ENCODE measurements at regions of chr3 and their contacts with region 1.

Region 1: DNA sequence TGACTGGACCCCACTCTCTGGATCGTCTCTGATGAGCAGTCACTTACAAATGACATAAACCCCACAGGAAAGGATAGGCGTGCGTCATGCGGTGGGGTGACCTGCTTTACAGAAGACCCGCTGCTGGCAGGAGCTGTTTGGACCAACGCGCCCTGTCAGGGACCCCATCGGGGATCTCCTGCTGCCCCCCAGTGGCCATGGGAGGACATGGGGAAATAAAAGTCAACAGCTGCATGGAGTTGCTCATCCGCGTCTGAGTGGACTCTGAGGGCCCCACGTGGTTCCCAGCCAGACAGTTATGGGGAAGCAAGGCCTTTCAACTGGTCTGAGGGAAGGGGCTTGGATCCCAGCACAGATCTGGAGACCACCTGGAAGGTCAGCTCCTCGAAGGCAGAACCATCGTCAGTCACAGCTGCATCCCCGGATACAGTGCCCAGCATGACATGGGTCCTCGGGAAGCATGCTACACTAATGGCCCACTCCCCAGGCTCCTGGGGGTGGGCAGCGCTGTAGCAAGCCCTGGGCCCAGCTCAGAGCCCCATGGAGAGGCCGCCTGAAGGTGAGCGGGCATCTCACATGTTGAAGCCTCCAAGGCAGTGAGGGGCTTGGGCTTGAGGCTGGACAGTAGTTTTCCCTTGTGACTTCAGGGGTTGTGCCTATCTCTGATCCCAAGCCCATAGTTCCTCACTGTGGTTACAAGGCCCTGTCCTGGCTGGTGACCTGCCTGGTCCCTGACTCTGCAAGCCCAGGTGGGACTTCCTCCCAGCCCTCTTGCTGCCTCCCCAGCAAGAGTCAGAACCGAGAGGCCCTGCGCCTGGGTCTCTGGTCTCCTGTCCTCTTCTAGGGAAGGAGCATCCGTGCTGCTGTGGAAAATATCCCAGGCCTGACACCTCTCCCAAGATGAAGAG is 32.3 kb downstream of the PTH1R start:
- DNase-seq: peak; percentile 53
- H3K4me3 ChIP-seq: no peak overlapping the region
- H3K27ac ChIP-seq: no peak overlapping the region
- H3K27me3 ChIP-seq: no peaks in the 10 kb centered on the region
- CTCF ChIP-seq: peak; percentile 96

Region 2: GRCh38 chr3:46705022-46705530 is 204.7 kb before region 1 on chr3:
- CTCF ChIA-PET with region 1: interaction called, 13 read pairs
- POLR2A ChIA-PET with region 1: no interaction called
- DNase-seq: peak; percentile 26
- H3K4me3 ChIP-seq: no peak overlapping the region
- H3K27ac ChIP-seq: no peak overlapping the region
- H3K27me3 ChIP-seq: peaks cover 47% of the 10 kb centered on the region
- CTCF ChIP-seq: peak; percentile 96

Region 3: GRCh38 chr3:46923559-46924350 is 14.0 kb after region 1 on chr3:
- CTCF ChIA-PET with region 1: interaction called, 13 read pairs
- POLR2A ChIA-PET with region 1: no interaction called
- DNase-seq: no peak
- H3K4me3 ChIP-seq: no peak overlapping the region
- H3K27ac ChIP-seq: no peak overlapping the region
- H3K27me3 ChIP-seq: no peaks in the 10 kb centered on the region
- CTCF ChIP-seq: peak; percentile 71